ENCODE measurements at regions of chr9 and their contacts with region 1.

Region 1: DNA sequence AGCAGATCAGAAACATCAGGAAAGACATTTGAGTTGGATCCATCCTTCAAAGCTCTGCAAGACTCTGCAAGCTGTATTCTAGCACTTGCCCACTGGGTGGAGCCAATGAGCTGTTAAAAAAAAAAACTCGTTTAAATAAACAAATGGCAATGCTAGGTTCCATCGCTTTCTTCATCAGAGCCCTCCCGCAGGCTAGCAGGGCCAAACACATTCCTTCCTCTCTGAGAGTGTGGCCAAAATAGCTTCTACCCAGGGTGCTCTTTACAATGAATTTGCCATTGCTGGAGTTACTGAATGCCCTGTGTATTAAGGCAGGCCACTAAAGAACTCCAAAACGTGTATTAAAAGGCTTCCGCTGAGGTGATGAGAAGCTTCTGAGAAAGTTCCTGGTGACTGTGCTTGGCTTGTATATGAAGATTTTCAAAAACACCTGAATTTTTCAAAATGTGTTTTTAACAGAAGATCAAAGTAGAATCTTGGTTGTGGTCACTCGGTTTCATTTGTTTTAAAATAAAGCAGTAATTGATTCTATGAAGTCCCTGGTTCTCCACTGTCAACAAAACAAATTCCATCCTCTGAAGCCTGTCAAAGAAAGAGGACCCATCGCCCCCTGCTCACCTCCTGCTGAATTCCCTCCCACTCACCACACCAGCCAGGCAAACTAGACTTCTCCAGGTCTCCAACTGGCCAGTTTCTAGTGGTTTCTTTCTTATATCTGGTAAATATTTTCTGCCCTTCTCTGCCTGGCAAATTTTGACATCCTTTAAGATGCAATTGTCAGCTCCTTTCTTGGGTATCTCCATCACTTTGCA is 36.5 kb upstream of the EQTN start:
- DNase-seq: no peak
- H3K4me3 ChIP-seq: no peak overlapping the region
- H3K27ac ChIP-seq: no peak overlapping the region
- H3K4me1 ChIP-seq: peaks cover 0 to 30% (median 17%) of the 10 kb centered on the region in 3 donors
- H3K27me3 ChIP-seq: no peaks in the 10 kb centered on the region
- CTCF ChIP-seq: peak; percentile 82 to 92 (median 88)
- POLR2A ChIP-seq: no peak

Region 2: GRCh38 chr9:27184556-27185351 is 148.7 kb before region 1 on chr9:
- intact Hi-C with region 1: no loop called
- DNase-seq: no peak
- H3K4me3 ChIP-seq: no peak overlapping the region
- H3K27ac ChIP-seq: no peak overlapping the region
- H3K4me1 ChIP-seq: peaks cover 0 to 25% (median 11%) of the 10 kb centered on the region in 3 donors
- H3K27me3 ChIP-seq: no peaks in the 10 kb centered on the region
- CTCF ChIP-seq: no peak
- POLR2A ChIP-seq: no peak

Region 3: GRCh38 chr9:27539479-27540441 is 206.3 kb after region 1 on chr9:
- intact Hi-C with region 1: loop called (anchors 5 kb)
- DNase-seq: no peak
- H3K4me3 ChIP-seq: no peak overlapping the region
- H3K27ac ChIP-seq: peak overlapping the region; percentile 54 to 90 (median 82)
- H3K4me1 ChIP-seq: peaks cover 12 to 45% (median 24%) of the 10 kb centered on the region in 3 donors
- H3K27me3 ChIP-seq: no peaks in the 10 kb centered on the region
- CTCF ChIP-seq: no peak
- POLR2A ChIP-seq: no peak

Measured in esophagus squamous epithelium (tissue), 5 donors.